ENCODE measurements at regions of chr1 and their contacts with region 1.

Region 1: GRCh38 chr1:78617615-78618026 is 2.6 kb upstream of the IFI44L start:
- DNase-seq: peak; percentile 13 to 82 (median 79)
- ATAC-seq: peak; percentile 84
- H3K4me3 ChIP-seq: no peak overlapping the region
- H3K4me3 Mint-ChIP-seq: peak overlapping the region in 3 of 10 donors; percentile 26 to 56 (median 44)
- H3K27ac ChIP-seq: no peak overlapping the region
- H3K27ac Mint-ChIP-seq: peak overlapping the region in 8 of 9 donors; percentile 23 to 99 (median 72)
- H3K4me1 ChIP-seq: peaks cover 7 to 19% of the 10 kb centered on the region in 2 donors
- H3K4me1 Mint-ChIP-seq: peaks cover 18 to 51% (median 42%) of the 10 kb centered on the region in 7 donors
- H3K27me3 ChIP-seq: no peaks in the 10 kb centered on the region
- H3K27me3 Mint-ChIP-seq: peaks cover 0 to 14% (median 0%) of the 10 kb centered on the region in 5 donors

Region 2: DNA sequence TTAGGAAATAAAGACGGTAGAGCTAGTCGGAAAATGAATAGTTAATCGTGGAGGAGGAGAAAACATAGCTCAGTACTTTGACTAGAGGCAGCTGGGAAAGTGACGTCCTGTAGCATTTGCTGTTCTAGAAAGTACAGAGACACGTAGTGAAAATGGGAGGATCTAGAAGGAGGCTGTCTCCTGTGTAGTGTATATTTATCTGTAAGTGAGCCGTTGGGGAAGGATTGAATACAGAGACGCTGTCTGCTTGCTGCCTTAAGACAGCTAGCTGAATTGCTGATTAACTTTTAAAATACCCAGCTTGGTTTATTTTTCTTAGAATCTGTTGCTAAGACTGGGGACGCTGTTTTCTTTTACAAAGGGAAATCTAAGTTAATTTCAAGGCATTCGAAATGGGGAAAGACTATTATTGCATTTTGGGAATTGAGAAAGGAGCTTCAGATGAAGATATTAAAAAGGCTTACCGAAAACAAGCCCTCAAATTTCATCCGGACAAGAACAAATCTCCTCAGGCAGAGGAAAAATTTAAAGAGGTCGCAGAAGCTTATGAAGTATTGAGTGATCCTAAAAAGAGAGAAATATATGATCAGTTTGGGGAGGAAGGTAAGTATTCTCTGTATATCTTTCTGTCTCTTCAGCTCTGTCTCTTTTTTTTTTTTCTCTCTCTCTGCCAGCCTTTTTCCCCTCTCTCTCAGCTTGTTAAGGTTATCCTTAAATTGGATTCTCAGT is 612.7 kb before region 1 on chr1 and contains the start of gene DNAJB4:
- CTCF ChIA-PET with region 1: interaction called, 4 read pairs
- POLR2A ChIA-PET with region 1: interaction called, 5 read pairs
- intact Hi-C with region 1: loop called in 1 of 2 experiments (anchors 10 kb)
- DNase-seq: peak in 8 of 9 donors; percentile 30 to 92 (median 87)
- ATAC-seq: peak; percentile 99
- H3K4me3 ChIP-seq: peak within 1 kb of the TSS; percentile 57
- H3K4me3 Mint-ChIP-seq: peak within 1 kb of the TSS; percentile 87 to 99 (median 92)
- H3K27ac ChIP-seq: peak within 1 kb of the TSS; percentile 95
- H3K27ac Mint-ChIP-seq: peak within 1 kb of the TSS; percentile 92 to 100 (median 99)
- H3K4me1 ChIP-seq: peaks cover 8 to 17% of the 10 kb centered on the region in 2 donors
- H3K4me1 Mint-ChIP-seq: peaks cover 9 to 57% (median 53%) of the 10 kb centered on the region in 7 donors
- H3K27me3 ChIP-seq: no peaks in the 10 kb centered on the region
- H3K27me3 Mint-ChIP-seq: peaks cover 0 to 3% (median 0%) of the 10 kb centered on the region in 5 donors
- total RNA-seq, gene DNAJB4: 11.4 to 20.1 (median 18.2) TPM

Region 3: GRCh38 chr1:78633209-78633608 is 15.6 kb after region 1 on chr1:
- CTCF ChIA-PET with region 1: interaction called, 5 read pairs
- POLR2A ChIA-PET with region 1: interaction called, 3 read pairs
- intact Hi-C with region 1: loop called in 1 of 2 experiments (anchors 1 kb)
- DNase-seq: no peak
- ATAC-seq: no peak
- H3K4me3 ChIP-seq: no peak overlapping the region
- H3K4me3 Mint-ChIP-seq: no peak overlapping the region
- H3K27ac ChIP-seq: no peak overlapping the region
- H3K27ac Mint-ChIP-seq: no peak overlapping the region
- H3K4me1 ChIP-seq: no peaks in the 10 kb centered on the region
- H3K4me1 Mint-ChIP-seq: peaks cover 5 to 49% (median 9%) of the 10 kb centered on the region in 7 donors
- H3K27me3 ChIP-seq: no peaks in the 10 kb centered on the region
- H3K27me3 Mint-ChIP-seq: no peaks in the 10 kb centered on the region

Region 4: DNA sequence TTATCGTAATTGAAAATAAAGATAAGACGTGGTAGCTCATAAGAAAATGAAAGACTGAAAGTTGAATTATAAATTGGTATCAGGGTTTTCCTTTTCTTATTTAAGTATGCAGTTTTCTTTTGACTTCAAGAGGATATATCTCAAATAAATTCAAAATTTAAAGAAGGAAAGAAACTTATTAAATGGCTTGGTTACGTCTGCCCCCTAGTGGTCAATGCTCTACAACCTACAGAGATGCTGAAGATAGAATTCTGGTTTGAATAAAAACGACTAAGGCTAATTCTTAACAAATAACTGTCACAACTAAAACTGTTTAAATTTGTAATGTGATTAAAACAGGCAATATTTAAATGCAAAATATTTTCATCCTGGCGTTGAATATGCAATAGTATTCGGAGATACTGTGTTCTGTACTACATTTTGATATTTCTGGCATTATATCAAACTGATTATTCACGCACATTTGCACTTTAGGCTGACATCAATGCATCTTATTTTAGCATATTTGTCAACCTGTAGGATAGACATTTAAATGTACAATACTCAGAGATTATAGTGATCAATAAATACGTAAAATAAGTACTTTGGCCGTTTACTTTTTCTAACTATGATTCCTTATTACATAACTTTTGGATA is 58.8 kb after region 1 on chr1:
- CTCF ChIA-PET with region 1: interaction called, 67 read pairs
- POLR2A ChIA-PET with region 1: interaction called, 5 read pairs
- intact Hi-C with region 1: loop called (anchors 1 kb)
- DNase-seq: peak in 7 of 9 donors; percentile 38 to 72 (median 62)
- ATAC-seq: peak; percentile 67
- H3K4me3 ChIP-seq: no peak overlapping the region
- H3K4me3 Mint-ChIP-seq: no peak overlapping the region
- H3K27ac ChIP-seq: no peak overlapping the region
- H3K27ac Mint-ChIP-seq: no peak overlapping the region
- H3K4me1 ChIP-seq: no peaks in the 10 kb centered on the region
- H3K4me1 Mint-ChIP-seq: peaks cover 3 to 33% (median 6%) of the 10 kb centered on the region in 7 donors
- H3K27me3 ChIP-seq: no peaks in the 10 kb centered on the region
- H3K27me3 Mint-ChIP-seq: peaks cover 0 to 6% (median 0%) of the 10 kb centered on the region in 5 donors

Region 5: GRCh38 chr1:78839704-78840277 is 222.2 kb after region 1 on chr1:
- CTCF ChIA-PET with region 1: no interaction called
- POLR2A ChIA-PET with region 1: no interaction called
- intact Hi-C with region 1: loop called (anchors 5 kb)
- DNase-seq: peak in 6 of 9 donors; percentile 13 to 32 (median 24)
- ATAC-seq: no peak
- H3K4me3 ChIP-seq: no peak overlapping the region
- H3K4me3 Mint-ChIP-seq: no peak overlapping the region
- H3K27ac ChIP-seq: no peak overlapping the region
- H3K27ac Mint-ChIP-seq: no peak overlapping the region
- H3K4me1 ChIP-seq: peaks cover 0 to 5% of the 10 kb centered on the region in 2 donors
- H3K4me1 Mint-ChIP-seq: peaks cover 6 to 17% (median 12%) of the 10 kb centered on the region in 7 donors
- H3K27me3 ChIP-seq: no peaks in the 10 kb centered on the region
- H3K27me3 Mint-ChIP-seq: peaks cover 0 to 6% (median 0%) of the 10 kb centered on the region in 5 donors

Measured in naive thymus-derived CD4-positive, alpha-beta T cell (primary cell).